Dendritic cell treated with granulocyte-macrophage colony-stimulating factor and Interleukin-4, amounts not matched to agents 40 ng/mL and 50 ng/mL, for 4 days (primary cell): ENCODE measurements at regions of chr5 and their contacts with region 1.

Region 1: DNA sequence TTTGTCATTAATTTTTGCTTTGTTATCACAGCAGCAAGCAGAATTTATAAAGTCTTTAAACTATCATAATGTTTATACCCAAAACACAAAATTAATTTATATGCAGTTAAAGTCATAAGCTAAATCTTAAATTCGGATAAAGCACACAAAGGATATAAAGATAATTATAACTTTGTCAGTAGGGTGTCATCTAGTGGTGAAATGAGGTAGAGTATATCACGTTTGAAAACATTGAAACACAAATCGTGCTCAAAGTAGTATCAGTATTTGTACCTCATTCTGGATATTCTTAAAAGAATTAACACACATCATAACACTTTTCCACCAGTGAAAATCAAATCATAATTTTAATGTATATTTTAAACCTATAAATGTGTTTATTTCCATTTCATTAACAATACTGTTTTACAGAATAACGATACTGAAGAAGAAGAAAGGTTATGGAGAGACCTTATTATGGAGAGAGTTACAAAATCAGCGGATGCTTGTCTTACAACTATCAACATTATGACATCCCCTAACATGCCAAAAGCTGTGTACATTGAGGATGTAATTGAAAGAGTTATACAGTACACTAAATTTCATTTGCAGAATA is 129.5 kb downstream of the NIPBL start:
- H3K4me3 Mint-ChIP-seq: no peak overlapping the region
- H3K27ac Mint-ChIP-seq: no peak overlapping the region
- H3K4me1 Mint-ChIP-seq: no peaks in the 10 kb centered on the region
- H3K27me3 Mint-ChIP-seq: no peaks in the 10 kb centered on the region

Region 2: DNA sequence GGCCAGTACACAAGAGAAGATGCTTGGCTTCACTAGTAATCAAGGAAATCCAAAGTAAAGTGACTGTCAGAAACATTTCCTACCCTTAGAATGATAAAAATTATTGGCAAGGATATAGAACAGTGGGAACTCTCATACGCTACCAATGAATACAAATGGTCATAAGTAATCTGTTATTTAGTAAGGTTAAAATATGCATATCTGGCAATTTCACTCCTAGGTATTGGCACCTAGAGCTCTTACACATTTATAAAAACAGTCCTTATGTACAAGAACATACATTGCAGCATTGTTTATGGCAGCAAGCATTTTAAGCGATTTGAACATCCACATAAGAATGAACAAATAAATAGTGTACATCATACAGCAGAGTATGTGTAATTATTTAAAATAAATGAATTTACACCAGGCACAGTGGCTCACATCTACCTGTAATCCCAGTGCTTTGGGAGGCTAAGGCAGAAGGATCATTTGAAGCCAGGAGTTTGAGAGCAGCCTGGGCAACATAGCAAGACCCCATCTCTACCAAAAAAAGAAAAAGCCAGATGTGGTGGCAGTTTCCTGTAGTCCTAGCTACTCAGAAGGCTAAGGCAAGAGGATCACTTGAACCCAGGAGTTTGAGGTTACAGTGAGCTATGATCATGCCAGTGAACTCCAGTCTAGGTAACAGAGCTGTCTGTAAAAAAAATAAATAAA is 36.2 kb before region 1 on chr5:
- intact Hi-C with region 1: loop called (anchors 5 kb)
- H3K4me3 Mint-ChIP-seq: no peak overlapping the region
- H3K27ac Mint-ChIP-seq: no peak overlapping the region
- H3K4me1 Mint-ChIP-seq: no peaks in the 10 kb centered on the region
- H3K27me3 Mint-ChIP-seq: no peaks in the 10 kb centered on the region

Region 3: DNA sequence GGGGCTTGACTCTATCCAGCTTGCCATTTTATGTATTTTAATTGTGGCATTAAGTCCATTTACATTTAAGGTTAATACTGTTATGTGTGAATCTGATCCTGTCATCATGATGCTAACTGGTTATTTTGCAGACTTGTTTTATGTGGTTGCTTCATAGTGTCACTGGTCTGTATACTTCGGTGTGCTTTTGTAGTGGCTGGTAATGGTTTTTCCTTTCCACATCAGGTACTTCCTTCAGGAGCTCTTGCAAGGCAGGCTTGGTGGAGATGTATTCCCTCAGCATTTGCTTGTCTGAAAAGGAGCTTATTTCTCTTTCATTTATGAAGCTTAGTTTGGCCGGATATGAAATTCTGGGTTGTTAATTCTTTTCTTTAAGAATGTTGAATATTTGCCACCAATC is 97.3 kb after region 1 on chr5:
- intact Hi-C with region 1: no loop called
- H3K4me3 Mint-ChIP-seq: no peak overlapping the region
- H3K27ac Mint-ChIP-seq: no peak overlapping the region
- H3K4me1 Mint-ChIP-seq: no peaks in the 10 kb centered on the region
- H3K27me3 Mint-ChIP-seq: no peaks in the 10 kb centered on the region

Region 4: DNA sequence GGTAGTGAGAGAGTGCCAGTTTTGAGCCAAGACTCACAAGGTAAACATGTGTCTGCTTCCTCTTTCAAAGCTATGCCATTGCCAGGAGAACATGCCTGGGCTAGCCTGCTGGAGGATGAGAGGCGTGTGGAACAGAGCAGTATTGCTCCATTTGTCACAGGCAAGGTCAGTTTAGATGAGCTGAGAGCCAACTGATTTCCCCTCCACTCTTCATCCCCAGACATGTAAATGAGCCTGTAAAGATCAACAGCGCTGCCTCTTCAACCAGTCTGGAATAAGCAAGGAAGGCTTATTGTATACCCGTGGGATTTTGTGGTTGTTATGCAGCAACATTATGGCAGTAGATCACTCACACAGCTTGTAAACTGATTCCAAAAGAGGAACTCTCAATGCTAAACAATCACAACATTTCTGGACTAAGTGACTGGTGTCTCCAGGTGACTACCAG is 842.0 kb after region 1 on chr5:
- intact Hi-C with region 1: no loop called
- H3K4me3 Mint-ChIP-seq: no peak overlapping the region
- H3K27ac Mint-ChIP-seq: no peak overlapping the region
- H3K4me1 Mint-ChIP-seq: no peaks in the 10 kb centered on the region
- H3K27me3 Mint-ChIP-seq: peaks cover 27% of the 10 kb centered on the region